ENCODE measurements at regions of chr9 and their contacts with region 1.

Region 1: DNA sequence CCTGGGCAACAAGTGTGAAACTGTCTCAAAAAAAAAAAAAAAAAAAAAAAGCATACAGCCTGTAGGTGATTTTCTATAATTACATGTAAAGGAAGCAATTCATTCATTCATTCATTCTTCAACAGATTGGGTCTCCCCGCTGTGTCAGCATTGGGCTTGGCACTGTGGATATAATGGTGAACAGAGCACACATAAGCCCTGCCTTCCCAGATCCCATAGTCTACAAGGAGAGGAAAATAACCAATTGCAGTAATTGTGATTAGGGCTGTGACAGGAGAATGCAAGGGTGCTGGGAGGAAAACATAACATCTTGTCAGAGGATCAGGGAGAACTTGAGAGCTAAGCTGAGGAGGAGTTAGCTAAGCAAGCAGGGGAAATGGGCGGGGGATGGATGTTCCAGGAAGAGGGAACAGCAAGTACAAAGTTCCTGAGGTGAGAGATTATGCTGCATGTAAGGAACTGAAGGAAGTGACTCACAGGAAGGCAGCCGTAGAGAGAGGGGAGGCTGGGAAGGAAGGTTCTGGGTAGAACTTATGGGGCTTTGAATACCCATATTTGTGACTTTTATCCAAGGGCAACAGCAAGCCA is 24.0 kb upstream of the KLF9 start:
- DNase-seq: peak; percentile 50
- H3K4me3 Mint-ChIP-seq: no peak overlapping the region
- H3K27ac Mint-ChIP-seq: no peak overlapping the region
- H3K4me1 Mint-ChIP-seq: peaks cover 16% of the 10 kb centered on the region
- H3K27me3 Mint-ChIP-seq: no peaks in the 10 kb centered on the region

Region 2: GRCh38 chr9:69996967-69997366 is 441.5 kb before region 1 on chr9:
- CTCF ChIA-PET with region 1: no interaction called
- intact Hi-C with region 1: no loop called
- DNase-seq: no peak
- H3K4me3 Mint-ChIP-seq: no peak overlapping the region
- H3K27ac Mint-ChIP-seq: no peak overlapping the region
- H3K4me1 Mint-ChIP-seq: no peaks in the 10 kb centered on the region
- H3K27me3 Mint-ChIP-seq: peaks cover 8% of the 10 kb centered on the region

Region 3: DNA sequence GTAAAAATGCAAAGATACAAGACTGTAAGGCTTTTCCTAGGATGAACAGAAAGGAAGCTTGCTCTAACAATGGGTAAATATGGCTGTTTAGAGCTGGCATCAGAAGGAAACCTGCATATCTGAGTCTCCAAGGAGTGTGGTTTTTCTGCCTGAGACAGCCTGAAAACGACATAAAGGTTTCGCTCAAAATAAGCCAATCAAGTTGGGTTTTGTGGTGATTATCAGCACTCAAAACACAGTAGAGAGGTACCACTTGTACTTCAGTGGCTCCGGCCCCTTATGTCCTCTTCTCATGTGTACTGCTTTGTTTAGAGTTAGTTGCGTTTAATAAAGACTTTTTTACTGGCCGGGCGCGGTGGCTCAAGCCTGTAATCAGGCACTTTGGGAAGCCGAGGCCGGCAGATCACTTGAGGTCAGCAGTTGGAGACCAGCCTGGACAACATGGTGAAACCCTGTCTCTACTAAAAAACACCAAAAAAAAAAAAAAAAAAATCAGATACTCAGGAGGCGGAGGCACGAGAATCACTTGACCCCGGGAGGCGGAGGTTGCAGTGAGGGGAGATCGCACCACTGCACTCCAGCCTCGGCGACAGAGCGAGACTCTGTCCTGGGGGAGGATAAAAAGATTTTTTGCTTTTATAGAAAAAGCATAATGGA is 63.3 kb before region 1 on chr9:
- CTCF ChIA-PET with region 1: no interaction called
- intact Hi-C with region 1: no loop called
- DNase-seq: no peak
- H3K4me3 Mint-ChIP-seq: no peak overlapping the region
- H3K27ac Mint-ChIP-seq: no peak overlapping the region
- H3K4me1 Mint-ChIP-seq: no peaks in the 10 kb centered on the region
- H3K27me3 Mint-ChIP-seq: no peaks in the 10 kb centered on the region

Region 4: DNA sequence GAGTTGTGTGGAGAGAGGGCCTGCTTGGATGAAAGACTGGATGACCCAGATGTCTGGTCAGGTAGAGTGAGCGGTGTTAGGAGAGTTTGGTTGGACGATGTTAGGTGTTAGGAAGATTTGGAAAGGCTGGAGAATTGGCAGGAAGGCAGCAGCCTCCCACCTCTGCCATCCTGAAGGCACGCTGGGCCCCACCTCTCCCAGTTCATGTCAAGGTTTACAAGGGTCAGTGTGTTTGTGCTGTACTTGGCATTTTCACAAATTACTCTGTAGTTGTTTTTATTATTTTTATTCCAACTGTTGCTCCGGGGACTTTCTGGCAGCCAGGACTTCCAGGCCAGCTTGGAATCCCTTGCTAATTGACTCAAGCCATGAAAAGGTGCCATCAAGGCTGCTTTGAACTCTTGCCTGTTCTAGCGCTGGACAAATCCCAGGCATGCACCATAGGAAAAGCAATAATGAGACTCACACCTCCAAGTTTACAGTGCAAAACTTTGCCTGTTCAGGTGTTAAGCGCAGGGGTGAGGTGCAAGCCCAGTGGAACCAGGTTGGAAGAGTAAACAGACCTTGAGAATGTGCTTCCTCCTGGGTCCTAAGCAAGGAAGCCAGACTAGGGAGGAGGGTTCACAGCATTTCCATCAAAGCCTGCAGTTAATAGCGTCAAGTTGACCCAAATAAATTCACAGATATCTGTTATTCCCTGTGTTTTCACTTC is 17.7 kb after region 1 on chr9:
- CTCF ChIA-PET with region 1: no interaction called
- intact Hi-C with region 1: loop called (anchors 2 kb)
- DNase-seq: no peak
- H3K4me3 Mint-ChIP-seq: no peak overlapping the region
- H3K27ac Mint-ChIP-seq: no peak overlapping the region
- H3K4me1 Mint-ChIP-seq: no peaks in the 10 kb centered on the region
- H3K27me3 Mint-ChIP-seq: no peaks in the 10 kb centered on the region

Region 5: GRCh38 chr9:70609542-70610286 is 171.3 kb after region 1 on chr9:
- CTCF ChIA-PET with region 1: no interaction called
- intact Hi-C with region 1: no loop called
- DNase-seq: no peak
- H3K4me3 Mint-ChIP-seq: no peak overlapping the region
- H3K27ac Mint-ChIP-seq: no peak overlapping the region
- H3K4me1 Mint-ChIP-seq: peaks cover 3% of the 10 kb centered on the region
- H3K27me3 Mint-ChIP-seq: peaks cover 2% of the 10 kb centered on the region